Adrenal gland (tissue), 19 donors: ENCODE measurements at regions of chr2 and their contacts with region 1.

Region 1: DNA sequence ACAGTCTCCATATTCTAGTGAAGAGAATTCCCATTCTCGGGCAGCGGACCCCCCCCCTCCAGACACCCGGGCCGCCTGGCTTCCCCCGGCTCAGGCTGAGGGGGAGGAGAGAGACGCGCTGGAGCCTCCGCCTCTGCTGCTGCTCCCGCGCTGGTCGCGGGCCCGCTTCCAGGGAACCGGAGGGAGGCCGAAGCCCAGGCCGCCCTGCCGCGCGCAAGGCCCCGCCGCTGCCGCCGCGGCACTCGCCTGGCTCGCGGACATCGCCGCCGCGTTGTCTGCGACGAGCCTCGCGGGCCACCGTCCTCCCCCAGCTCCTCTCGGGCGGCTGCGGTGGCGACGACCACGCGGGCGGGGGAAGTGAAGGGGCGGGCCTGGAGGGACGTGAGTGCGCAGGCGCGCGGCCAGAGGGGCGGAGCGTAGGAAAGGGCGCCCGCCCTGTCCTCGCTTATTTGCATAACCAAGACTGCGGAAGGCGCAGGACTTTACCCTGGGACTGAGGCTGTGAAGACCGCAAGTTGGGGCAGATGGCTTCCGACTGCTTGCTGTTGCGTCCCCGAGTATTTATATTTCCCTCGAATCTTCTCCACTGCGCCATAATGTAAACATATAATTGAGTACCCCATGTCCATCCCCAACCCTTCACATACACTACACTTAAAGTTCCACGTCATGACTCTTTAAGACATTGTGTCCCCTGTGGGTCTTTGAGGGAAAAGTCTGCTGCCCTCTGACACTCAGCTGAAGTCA is at the start of gene ARL5A:
- DNase-seq: peak; percentile 95 to 97 (median 96)
- H3K4me3 ChIP-seq: peak within 1 kb of the TSS; percentile 18 to 93 (median 72)
- H3K27ac ChIP-seq: peak within 1 kb of the TSS; percentile 42 to 93 (median 88)
- H3K4me1 ChIP-seq: peaks cover 19 to 36% of the 10 kb centered on the region in 2 donors
- H3K27me3 ChIP-seq: no peaks in the 10 kb centered on the region
- CTCF ChIP-seq: no peak
- POLR2A ChIP-seq: peak; percentile 67 to 92
- total RNA-seq, gene ARL5A: 38.4 to 99.0 (median 70.4) TPM

Region 2: DNA sequence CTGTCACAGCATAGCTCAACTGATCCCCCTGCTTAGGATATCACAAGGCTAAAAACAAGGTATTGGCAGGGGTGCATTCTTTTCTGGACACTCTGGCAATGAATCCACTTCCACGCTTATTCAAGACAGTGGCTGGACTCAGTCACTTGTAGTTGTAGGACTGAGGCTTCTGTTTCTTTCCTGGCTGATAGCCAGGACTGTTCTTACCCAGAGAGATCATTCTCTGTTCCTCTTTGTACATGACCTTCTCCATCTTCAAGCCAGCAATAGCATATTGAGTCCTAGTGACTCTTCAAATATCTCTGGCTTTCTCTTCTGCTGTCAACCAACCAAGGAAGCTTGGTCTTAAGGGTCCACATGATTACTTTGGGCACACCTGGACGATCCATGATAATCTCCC is 807.9 kb before region 1 on chr2:
- intact Hi-C with region 1: no loop called
- DNase-seq: no peak
- H3K4me3 ChIP-seq: no peak overlapping the region
- H3K27ac ChIP-seq: no peak overlapping the region
- H3K4me1 ChIP-seq: no peaks in the 10 kb centered on the region
- H3K27me3 ChIP-seq: no peaks in the 10 kb centered on the region
- CTCF ChIP-seq: no peak
- POLR2A ChIP-seq: no peak

Region 3: DNA sequence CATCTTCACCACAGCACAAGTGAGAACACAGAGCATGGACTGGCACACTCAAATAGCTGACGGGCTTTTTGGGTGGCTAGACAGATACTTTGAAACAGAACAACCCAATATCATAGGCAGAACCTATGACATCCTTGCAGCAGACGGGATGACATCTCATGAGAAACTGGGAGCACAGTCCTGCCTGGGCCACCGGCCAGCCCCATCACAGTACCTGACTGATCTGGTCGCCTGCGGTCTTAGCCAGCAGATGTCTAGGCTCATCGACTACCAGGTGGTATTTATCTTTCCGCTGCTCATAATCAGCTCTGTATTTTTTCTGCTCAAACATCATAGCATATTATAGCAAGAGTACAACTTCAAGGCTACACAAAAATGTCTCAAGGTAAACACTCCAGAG is 294.3 kb before region 1 on chr2:
- intact Hi-C with region 1: no loop called
- DNase-seq: no peak
- H3K4me3 ChIP-seq: no peak overlapping the region
- H3K27ac ChIP-seq: no peak overlapping the region
- H3K4me1 ChIP-seq: no peaks in the 10 kb centered on the region
- H3K27me3 ChIP-seq: no peaks in the 10 kb centered on the region
- CTCF ChIP-seq: no peak
- POLR2A ChIP-seq: no peak

Region 4: GRCh38 chr2:151999053-151999452 is 170.7 kb after region 1 on chr2:
- intact Hi-C with region 1: loop called in 1 of 2 experiments (anchors 10 kb)
- DNase-seq: peak; percentile 46 to 77 (median 64)
- H3K4me3 ChIP-seq: no peak overlapping the region
- H3K27ac ChIP-seq: no peak overlapping the region
- H3K4me1 ChIP-seq: peaks cover 23 to 27% of the 10 kb centered on the region in 2 donors
- H3K27me3 ChIP-seq: no peaks in the 10 kb centered on the region
- CTCF ChIP-seq: peak; percentile 57 to 80 (median 65)
- POLR2A ChIP-seq: no peak

Region 5: GRCh38 chr2:152284398-152284797 is 456.1 kb after region 1 on chr2:
- intact Hi-C with region 1: no loop called
- DNase-seq: no peak
- H3K4me3 ChIP-seq: no peak overlapping the region
- H3K27ac ChIP-seq: no peak overlapping the region
- H3K4me1 ChIP-seq: no peaks in the 10 kb centered on the region
- H3K27me3 ChIP-seq: no peaks in the 10 kb centered on the region
- CTCF ChIP-seq: no peak
- POLR2A ChIP-seq: no peak